B cell (primary cell): ENCODE measurements at regions of chr19 and their contacts with region 1.

Region 1: GRCh38 chr19:15418588-15419412 is at the start of gene AKAP8L:
- DNase-seq: peak; percentile 100
- ATAC-seq: peak; percentile 93
- H3K4me3 ChIP-seq: peak within 1 kb of the TSS; percentile 36 to 97 (median 91)
- H3K4me3 Mint-ChIP-seq: peak within 1 kb of the TSS; percentile 100
- H3K27ac ChIP-seq: peak within 1 kb of the TSS; percentile 68 to 85
- H3K27ac Mint-ChIP-seq: peak within 1 kb of the TSS; percentile 100
- H3K4me1 ChIP-seq: peaks cover 18 to 24% of the 10 kb centered on the region in 2 donors
- H3K4me1 Mint-ChIP-seq: peaks cover 39% of the 10 kb centered on the region
- H3K27me3 ChIP-seq: no peaks in the 10 kb centered on the region
- H3K27me3 Mint-ChIP-seq: no peaks in the 10 kb centered on the region
- CTCF ChIP-seq: peak; percentile 87
- total RNA-seq, gene AKAP8L: 211 and 219 TPM in 2 replicates

Region 2: DNA sequence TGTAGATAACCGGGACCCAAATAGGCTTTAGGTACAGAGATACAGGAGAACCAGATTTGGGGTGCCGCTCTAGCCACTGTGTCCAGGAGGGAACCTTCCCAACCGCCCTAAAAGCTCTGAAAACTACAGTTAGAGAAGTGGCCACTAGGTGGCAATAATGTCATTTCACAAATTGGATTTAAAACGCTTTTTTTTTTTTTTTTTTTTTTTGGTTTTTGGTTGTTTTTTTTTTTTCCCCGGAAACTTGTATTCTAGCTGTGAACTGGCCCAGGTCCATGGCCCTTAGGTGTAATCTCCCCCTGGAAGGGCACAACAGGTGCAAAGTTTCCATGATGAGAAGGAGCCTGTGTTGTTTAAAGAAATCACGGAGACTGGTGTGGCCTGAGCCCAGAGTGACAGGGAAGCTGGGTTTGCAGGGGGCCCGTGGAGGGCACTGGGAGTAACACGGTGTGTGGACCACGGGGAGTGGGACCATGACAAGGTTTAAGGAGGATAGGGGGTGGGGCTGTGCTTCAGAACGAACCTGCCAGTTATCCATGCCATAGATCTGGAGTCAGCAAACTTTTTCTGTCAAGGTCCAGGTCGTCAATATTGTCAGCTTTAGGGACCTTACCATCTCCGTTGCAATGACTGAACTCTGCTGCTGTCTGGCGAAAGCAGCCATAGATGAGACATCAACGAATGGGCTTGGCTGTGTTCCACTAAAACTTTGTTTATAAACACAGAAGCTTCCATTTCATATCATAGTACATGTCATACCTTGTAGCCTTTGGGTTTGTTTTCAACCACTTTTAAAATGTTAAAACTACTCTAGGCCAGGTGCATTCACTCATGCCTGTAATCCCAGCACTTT is 326.7 kb before region 1 on chr19:
- CTCF ChIA-PET with region 1: interaction called, 17 read pairs
- POLR2A ChIA-PET with region 1: no interaction called
- intact Hi-C with region 1: no loop called
- DNase-seq: peak; percentile 82
- ATAC-seq: peak; percentile 66
- H3K4me3 ChIP-seq: no peak overlapping the region
- H3K4me3 Mint-ChIP-seq: no peak overlapping the region
- H3K27ac ChIP-seq: no peak overlapping the region
- H3K27ac Mint-ChIP-seq: no peak overlapping the region
- H3K4me1 ChIP-seq: peaks cover 4 to 6% of the 10 kb centered on the region in 2 donors
- H3K4me1 Mint-ChIP-seq: peaks cover 2% of the 10 kb centered on the region
- H3K27me3 ChIP-seq: peaks cover 0 to 4% (median 2%) of the 10 kb centered on the region in 4 experiments
- H3K27me3 Mint-ChIP-seq: peaks cover 28% of the 10 kb centered on the region
- CTCF ChIP-seq: peak; percentile 85

Region 3: GRCh38 chr19:15288146-15288963 is 130.4 kb before region 1 on chr19:
- CTCF ChIA-PET with region 1: interaction called, 3 read pairs
- POLR2A ChIA-PET with region 1: no interaction called
- intact Hi-C with region 1: loop called (anchors 1 kb)
- DNase-seq: peak; percentile 76
- ATAC-seq: peak; percentile 88
- H3K4me3 ChIP-seq: peak overlapping the region in 4 of 5 experiments; percentile 4 to 35 (median 24)
- H3K4me3 Mint-ChIP-seq: peak overlapping the region; percentile 83
- H3K27ac ChIP-seq: peak overlapping the region; percentile 67 to 71
- H3K27ac Mint-ChIP-seq: peak overlapping the region; percentile 91
- H3K4me1 ChIP-seq: peaks cover 95 to 98% of the 10 kb centered on the region in 2 donors
- H3K4me1 Mint-ChIP-seq: peaks cover 95% of the 10 kb centered on the region
- H3K27me3 ChIP-seq: no peaks in the 10 kb centered on the region
- H3K27me3 Mint-ChIP-seq: no peaks in the 10 kb centered on the region
- CTCF ChIP-seq: no peak

Region 4: GRCh38 chr19:15304140-15304705 is 114.6 kb before region 1 on chr19:
- CTCF ChIA-PET with region 1: no interaction called
- POLR2A ChIA-PET with region 1: no interaction called
- intact Hi-C with region 1: no loop called
- DNase-seq: no peak
- ATAC-seq: no peak
- H3K4me3 ChIP-seq: no peak overlapping the region
- H3K4me3 Mint-ChIP-seq: peak overlapping the region; percentile 56
- H3K27ac ChIP-seq: peak overlapping the region in 1 of 2 donors; percentile 45
- H3K27ac Mint-ChIP-seq: peak overlapping the region; percentile 28
- H3K4me1 ChIP-seq: peaks cover 76 to 78% of the 10 kb centered on the region in 2 donors
- H3K4me1 Mint-ChIP-seq: peaks cover 79% of the 10 kb centered on the region
- H3K27me3 ChIP-seq: no peaks in the 10 kb centered on the region
- H3K27me3 Mint-ChIP-seq: no peaks in the 10 kb centered on the region
- CTCF ChIP-seq: no peak

Region 5: DNA sequence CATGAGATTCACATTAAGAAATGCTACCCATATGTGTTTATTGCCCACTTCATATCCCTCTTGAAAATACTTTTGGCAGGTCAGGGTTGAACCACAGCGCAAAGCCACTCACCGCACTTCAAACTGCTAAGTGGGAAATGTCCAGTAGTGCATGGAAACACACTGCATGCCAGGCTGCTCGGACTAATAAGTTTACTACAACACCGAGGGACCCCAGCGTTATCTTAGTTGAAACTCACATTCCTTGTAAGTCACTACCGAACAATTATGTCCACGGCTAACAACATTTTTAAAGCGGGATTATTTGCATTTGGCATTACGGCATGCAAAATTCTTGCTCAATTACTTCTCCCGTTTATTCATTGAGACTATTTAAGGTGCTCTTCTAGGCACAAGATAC is 90.5 kb before region 1 on chr19:
- CTCF ChIA-PET with region 1: no interaction called
- POLR2A ChIA-PET with region 1: no interaction called
- intact Hi-C with region 1: no loop called
- DNase-seq: no peak
- ATAC-seq: no peak
- H3K4me3 ChIP-seq: no peak overlapping the region
- H3K4me3 Mint-ChIP-seq: peak overlapping the region; percentile 62
- H3K27ac ChIP-seq: no peak overlapping the region
- H3K27ac Mint-ChIP-seq: peak overlapping the region; percentile 67
- H3K4me1 ChIP-seq: peaks cover 77 to 81% of the 10 kb centered on the region in 2 donors
- H3K4me1 Mint-ChIP-seq: peaks cover 75% of the 10 kb centered on the region
- H3K27me3 ChIP-seq: no peaks in the 10 kb centered on the region
- H3K27me3 Mint-ChIP-seq: no peaks in the 10 kb centered on the region
- CTCF ChIP-seq: no peak

Region 6: GRCh38 chr19:15379083-15379995 is 39.5 kb before region 1 on chr19 and contains the start of gene AKAP8:
- CTCF ChIA-PET with region 1: interaction called, 27 read pairs
- POLR2A ChIA-PET with region 1: interaction called, 38 read pairs
- intact Hi-C with region 1: loop called (anchors 1 kb)
- DNase-seq: peak; percentile 99
- ATAC-seq: peak; percentile 91
- H3K4me3 ChIP-seq: peak within 1 kb of the TSS; percentile 87 to 99 (median 94)
- H3K4me3 Mint-ChIP-seq: peak within 1 kb of the TSS; percentile 97
- H3K27ac ChIP-seq: peak within 1 kb of the TSS; percentile 92 to 97
- H3K27ac Mint-ChIP-seq: peak within 1 kb of the TSS; percentile 100
- H3K4me1 ChIP-seq: peaks cover 26 to 27% of the 10 kb centered on the region in 2 donors
- H3K4me1 Mint-ChIP-seq: peaks cover 39% of the 10 kb centered on the region
- H3K27me3 ChIP-seq: no peaks in the 10 kb centered on the region
- H3K27me3 Mint-ChIP-seq: no peaks in the 10 kb centered on the region
- CTCF ChIP-seq: no peak
- total RNA-seq, gene AKAP8: 80.0 and 84.8 TPM in 2 replicates

Region 7: DNA sequence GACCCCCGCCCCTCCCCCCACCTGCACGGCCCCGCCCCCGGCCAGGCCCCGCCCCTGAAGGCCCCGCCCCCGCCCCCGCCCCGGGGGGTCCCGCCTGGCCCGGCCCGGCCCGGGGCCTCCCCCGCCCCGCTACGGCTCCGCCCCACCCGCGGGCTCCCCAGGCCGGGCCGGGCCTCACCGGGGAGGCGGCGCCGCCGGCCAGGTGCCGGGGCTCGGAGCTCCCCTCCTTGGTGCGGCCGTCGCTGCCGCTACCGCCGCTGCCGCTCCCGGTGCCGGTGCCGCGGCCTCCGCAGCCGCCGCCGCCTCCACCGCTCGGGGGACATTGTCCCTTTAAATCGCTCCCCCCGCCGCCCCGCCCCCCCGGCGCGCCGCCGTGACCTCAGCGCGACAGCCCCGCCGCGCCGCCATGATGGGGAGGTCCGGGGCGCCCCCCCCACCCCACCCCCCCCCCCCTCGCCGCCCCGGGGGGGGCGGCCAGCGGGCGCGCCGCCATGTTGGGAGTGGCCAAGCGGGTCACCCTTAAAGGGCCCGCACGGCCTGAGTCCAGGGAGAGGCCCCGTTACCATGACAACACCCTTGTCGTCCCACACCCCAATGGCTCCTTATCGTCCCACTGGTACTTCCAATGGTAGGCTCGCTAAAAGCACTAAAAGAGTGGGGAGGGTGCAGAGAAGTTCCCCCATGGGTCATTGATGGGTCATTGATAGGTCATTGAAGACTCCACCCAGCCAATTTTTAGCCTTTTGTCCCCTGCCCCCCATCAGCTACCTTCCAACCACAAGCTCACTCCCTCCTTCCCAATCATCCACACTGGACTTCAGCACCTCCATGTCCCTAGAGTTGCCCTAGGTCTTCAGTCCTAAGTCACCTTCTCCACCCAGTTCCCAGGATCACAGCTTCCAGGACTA is 31.1 kb after region 1 on chr19 and contains the start of gene WIZ:
- CTCF ChIA-PET with region 1: interaction called, 7 read pairs
- POLR2A ChIA-PET with region 1: interaction called, 3 read pairs
- intact Hi-C with region 1: loop called (anchors 1 kb)
- DNase-seq: peak; percentile 91
- ATAC-seq: peak; percentile 78
- H3K4me3 ChIP-seq: peak within 1 kb of the TSS in 4 of 5 experiments; percentile 51 to 69 (median 58)
- H3K4me3 Mint-ChIP-seq: peak within 1 kb of the TSS; percentile 85
- H3K27ac ChIP-seq: peak within 1 kb of the TSS; percentile 73 to 81
- H3K27ac Mint-ChIP-seq: peak within 1 kb of the TSS; percentile 92
- H3K4me1 ChIP-seq: peaks cover 8 to 17% of the 10 kb centered on the region in 2 donors
- H3K4me1 Mint-ChIP-seq: peaks cover 12% of the 10 kb centered on the region
- H3K27me3 ChIP-seq: no peaks in the 10 kb centered on the region
- H3K27me3 Mint-ChIP-seq: no peaks in the 10 kb centered on the region
- CTCF ChIP-seq: no peak
- total RNA-seq, gene WIZ: 24.8 and 28.9 TPM in 2 replicates

Region 8: GRCh38 chr19:15555759-15556633 is 137.2 kb after region 1 on chr19:
- CTCF ChIA-PET with region 1: interaction called, 145 read pairs
- POLR2A ChIA-PET with region 1: interaction called, 10 read pairs
- intact Hi-C with region 1: loop called (anchors 1 kb)
- DNase-seq: peak; percentile 93
- ATAC-seq: peak; percentile 87
- H3K4me3 ChIP-seq: peak overlapping the region; percentile 17 to 89 (median 51)
- H3K4me3 Mint-ChIP-seq: peak overlapping the region; percentile 91
- H3K27ac ChIP-seq: peak overlapping the region; percentile 12 to 51
- H3K27ac Mint-ChIP-seq: peak overlapping the region; percentile 78
- H3K4me1 ChIP-seq: peaks cover 19 to 21% of the 10 kb centered on the region in 2 donors
- H3K4me1 Mint-ChIP-seq: peaks cover 18% of the 10 kb centered on the region
- H3K27me3 ChIP-seq: peaks cover 0 to 33% (median 6%) of the 10 kb centered on the region in 4 experiments
- H3K27me3 Mint-ChIP-seq: peaks cover 9% of the 10 kb centered on the region
- CTCF ChIP-seq: peak; percentile 76